Spleen (tissue), 13 donors: ENCODE measurements at regions of chr17 and their contacts with region 1.

Region 1: GRCh38 chr17:409848-410545 is 57.4 kb upstream of the RPH3AL start:
- DNase-seq: peak; percentile 99
- H3K4me3 ChIP-seq: peak overlapping the region; percentile 69 to 94 (median 86)
- H3K27ac ChIP-seq: peak overlapping the region; percentile 58 to 88 (median 83)
- H3K4me1 ChIP-seq: peaks cover 19 to 59% (median 43%) of the 10 kb centered on the region in 6 donors
- H3K27me3 ChIP-seq: peaks cover 0 to 8% (median 0%) of the 10 kb centered on the region in 7 donors
- CTCF ChIP-seq: peak in 3 of 11 experiments; percentile 6 to 31 (median 17)
- POLR2A ChIP-seq: no peak

Region 2: GRCh38 chr17:333626-334396 is 76.2 kb before region 1 on chr17:
- intact Hi-C with region 1: no loop called
- DNase-seq: peak; percentile 90
- H3K4me3 ChIP-seq: peak overlapping the region in 5 of 8 donors; percentile 34 to 64 (median 39)
- H3K27ac ChIP-seq: peak overlapping the region; percentile 75 to 90 (median 82)
- H3K4me1 ChIP-seq: peaks cover 10 to 96% (median 53%) of the 10 kb centered on the region in 6 donors
- H3K27me3 ChIP-seq: peaks cover 0 to 37% (median 0%) of the 10 kb centered on the region in 7 donors
- CTCF ChIP-seq: no peak
- POLR2A ChIP-seq: peak in 1 of 3 donors; percentile 53

Region 3: GRCh38 chr17:489758-490329 is 79.8 kb after region 1 on chr17:
- intact Hi-C with region 1: no loop called
- DNase-seq: peak; percentile 94
- H3K4me3 ChIP-seq: peak overlapping the region; percentile 41 to 80 (median 62)
- H3K27ac ChIP-seq: peak overlapping the region; percentile 42 to 93 (median 85)
- H3K4me1 ChIP-seq: peaks cover 0 to 41% (median 27%) of the 10 kb centered on the region in 6 donors
- H3K27me3 ChIP-seq: peaks cover 0 to 20% (median 0%) of the 10 kb centered on the region in 7 donors
- CTCF ChIP-seq: no peak
- POLR2A ChIP-seq: no peak

Region 4: GRCh38 chr17:700504-701094 is 290.6 kb after region 1 on chr17:
- intact Hi-C with region 1: loop called (anchors 5 kb)
- DNase-seq: no peak
- H3K4me3 ChIP-seq: no peak overlapping the region
- H3K27ac ChIP-seq: no peak overlapping the region
- H3K4me1 ChIP-seq: peaks cover 0 to 67% (median 20%) of the 10 kb centered on the region in 6 donors
- H3K27me3 ChIP-seq: no peaks in the 10 kb centered on the region
- CTCF ChIP-seq: peak; percentile 37 to 77 (median 67)
- POLR2A ChIP-seq: no peak